HCT116 (cell line): ENCODE measurements at regions of chr1 and their contacts with region 1.

Region 1: GRCh38 chr1:95043141-95043980 is 29.4 kb downstream of the ALG14 start:
- DNase-seq: peak; percentile 73
- ATAC-seq: peak; percentile 87
- H3K4me3 ChIP-seq: no peak overlapping the region
- H3K27ac ChIP-seq: no peak overlapping the region
- H3K4me1 ChIP-seq: peaks cover 3 to 33% of the 10 kb centered on the region in 2 experiments; a peak in 3 of 4 replicates
- H3K27me3 ChIP-seq: no peaks in the 10 kb centered on the region
- CTCF ChIP-seq: peak; percentile 97 to 99 (median 99)
- POLR2A ChIP-seq: no peak
- RAD21 ChIP-seq: peak; percentile 94

Region 2: GRCh38 chr1:94481473-94481933 is 561.9 kb before region 1 on chr1:
- CTCF ChIA-PET with region 1: interaction called, 3 read pairs
- POLR2A ChIA-PET with region 1: no interaction called
- RAD21 ChIA-PET with region 1: interaction called in 1 of 2 experiments, 3 read pairs
- intact Hi-C with region 1: loop called (anchors 1 kb)
- DNase-seq: peak; percentile 69
- ATAC-seq: peak; percentile 99
- H3K4me3 ChIP-seq: no peak overlapping the region
- H3K27ac ChIP-seq: no peak overlapping the region
- H3K4me1 ChIP-seq: peaks cover 0 to 8% of the 10 kb centered on the region in 2 experiments; a peak in 2 of 4 replicates
- H3K27me3 ChIP-seq: no peaks in the 10 kb centered on the region
- CTCF ChIP-seq: peak; percentile 69 to 91 (median 89)
- POLR2A ChIP-seq: no peak
- RAD21 ChIP-seq: peak; percentile 73

Region 3: DNA sequence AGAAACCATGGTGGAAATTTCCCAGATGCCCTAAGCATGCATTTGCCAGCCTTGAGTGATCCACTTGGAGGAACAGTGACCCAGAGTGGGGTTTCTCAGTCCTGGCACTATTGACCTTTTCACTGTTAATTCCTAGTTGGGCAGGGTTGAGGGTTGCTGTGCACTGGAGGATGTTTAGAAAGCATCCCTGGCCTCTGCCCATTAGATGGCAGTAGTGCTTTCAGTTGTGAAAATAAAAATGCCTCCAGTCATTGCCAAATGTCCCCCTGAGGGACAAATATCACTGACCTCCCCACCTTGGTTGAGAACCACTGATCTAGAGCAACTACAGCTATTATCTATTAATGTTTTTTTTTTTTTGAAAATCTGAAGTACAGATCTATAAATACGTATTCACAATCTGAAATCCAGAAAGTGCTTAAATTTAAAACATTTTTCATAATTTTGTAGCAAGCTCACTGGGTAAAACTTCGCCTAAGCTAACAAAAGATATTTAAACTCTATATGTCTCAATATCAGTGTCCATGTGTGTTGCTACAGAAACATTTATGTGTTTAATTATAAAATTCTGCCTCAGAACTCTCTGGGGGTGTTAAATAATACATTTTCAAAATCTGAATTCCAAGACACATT is 529.1 kb before region 1 on chr1:
- CTCF ChIA-PET with region 1: no interaction called
- POLR2A ChIA-PET with region 1: no interaction called
- RAD21 ChIA-PET with region 1: no interaction called
- intact Hi-C with region 1: loop called (anchors 2 kb)
- DNase-seq: peak; percentile 42
- ATAC-seq: peak; percentile 86
- H3K4me3 ChIP-seq: no peak overlapping the region
- H3K27ac ChIP-seq: no peak overlapping the region
- H3K4me1 ChIP-seq: no peaks in the 10 kb centered on the region
- H3K27me3 ChIP-seq: no peaks in the 10 kb centered on the region
- CTCF ChIP-seq: peak; percentile 63 to 77 (median 74); a peak in 5 of 6 replicates
- POLR2A ChIP-seq: no peak
- RAD21 ChIP-seq: peak; percentile 80

Region 4: GRCh38 chr1:94854458-94855306 is 188.7 kb before region 1 on chr1:
- CTCF ChIA-PET with region 1: interaction called, 190 read pairs
- POLR2A ChIA-PET with region 1: interaction called, 5 read pairs
- RAD21 ChIA-PET with region 1: interaction called, 30 to 52 read pairs
- intact Hi-C with region 1: loop called (anchors 1 kb)
- DNase-seq: peak; percentile 86
- ATAC-seq: peak; percentile 92
- H3K4me3 ChIP-seq: peak overlapping the region; percentile 42 to 57
- H3K27ac ChIP-seq: peak overlapping the region; percentile 28; the same call in 1 of the 2 replicates
- H3K4me1 ChIP-seq: peaks cover 16 to 31% of the 10 kb centered on the region in 2 experiments
- H3K27me3 ChIP-seq: no peaks in the 10 kb centered on the region
- CTCF ChIP-seq: peak; percentile 91 to 94 (median 93)
- POLR2A ChIP-seq: no peak
- RAD21 ChIP-seq: peak; percentile 96

Region 5: GRCh38 chr1:94863919-94864318 is 179.4 kb before region 1 on chr1:
- CTCF ChIA-PET with region 1: interaction called, 12 read pairs
- POLR2A ChIA-PET with region 1: no interaction called
- RAD21 ChIA-PET with region 1: interaction called in 1 of 2 experiments, 3 read pairs
- intact Hi-C with region 1: no loop called
- DNase-seq: peak; percentile 78
- ATAC-seq: peak; percentile 86
- H3K4me3 ChIP-seq: peak overlapping the region; percentile 0 to 46; a peak in 3 of 4 replicates
- H3K27ac ChIP-seq: peak overlapping the region; percentile 79
- H3K4me1 ChIP-seq: peaks cover 46 to 62% of the 10 kb centered on the region in 2 experiments
- H3K27me3 ChIP-seq: no peaks in the 10 kb centered on the region
- CTCF ChIP-seq: no peak
- POLR2A ChIP-seq: no peak
- RAD21 ChIP-seq: peak; percentile 19; the same call in 1 of the 2 replicates

Region 6: GRCh38 chr1:94926915-94927404 is 116.4 kb before region 1 on chr1 and contains the start of gene CNN3:
- CTCF ChIA-PET with region 1: interaction called, 3 read pairs
- POLR2A ChIA-PET with region 1: interaction called, 3 read pairs
- RAD21 ChIA-PET with region 1: interaction called in 1 of 2 experiments, 4 read pairs
- intact Hi-C with region 1: loop called (anchors 2 kb)
- DNase-seq: peak; percentile 62
- ATAC-seq: peak; percentile 85
- H3K4me3 ChIP-seq: peak within 1 kb of the TSS; percentile 69 to 86
- H3K27ac ChIP-seq: peak within 1 kb of the TSS; percentile 89
- H3K4me1 ChIP-seq: peaks cover 11 to 34% of the 10 kb centered on the region in 2 experiments; a peak in 3 of 4 replicates
- H3K27me3 ChIP-seq: no peaks in the 10 kb centered on the region
- CTCF ChIP-seq: no peak
- POLR2A ChIP-seq: peak; percentile 31
- RAD21 ChIP-seq: peak; percentile 20; the same call in 1 of the 2 replicates
- total RNA-seq, gene CNN3: 109 TPM

Region 7: GRCh38 chr1:95216292-95216990 is 173.1 kb after region 1 on chr1:
- CTCF ChIA-PET with region 1: no interaction called
- POLR2A ChIA-PET with region 1: no interaction called
- RAD21 ChIA-PET with region 1: no interaction called
- intact Hi-C with region 1: no loop called
- DNase-seq: no peak
- ATAC-seq: no peak
- H3K4me3 ChIP-seq: no peak overlapping the region
- H3K27ac ChIP-seq: no peak overlapping the region
- H3K4me1 ChIP-seq: no peaks in the 10 kb centered on the region
- H3K27me3 ChIP-seq: no peaks in the 10 kb centered on the region
- CTCF ChIP-seq: no peak
- POLR2A ChIP-seq: no peak
- RAD21 ChIP-seq: no peak

Region 8: DNA sequence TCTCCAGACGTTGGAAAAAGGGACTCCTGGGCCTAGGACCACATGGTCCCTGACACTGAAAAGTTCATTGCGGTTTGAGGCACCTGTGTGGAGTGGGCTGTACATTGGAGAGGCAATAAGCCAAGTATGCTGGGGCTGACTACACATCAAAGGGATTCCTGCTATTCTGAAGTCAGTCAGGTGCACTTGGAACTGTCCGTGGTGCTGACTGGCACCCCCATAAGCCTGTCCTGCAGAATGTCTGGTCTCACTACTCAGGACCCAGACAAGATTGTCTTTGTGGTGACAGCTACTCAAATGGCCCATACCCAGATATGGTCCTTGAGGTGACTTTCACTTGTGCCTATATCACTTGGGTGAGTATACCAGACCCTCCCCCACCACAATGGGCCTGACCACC is 341.2 kb after region 1 on chr1:
- CTCF ChIA-PET with region 1: no interaction called
- POLR2A ChIA-PET with region 1: no interaction called
- RAD21 ChIA-PET with region 1: no interaction called
- intact Hi-C with region 1: no loop called
- DNase-seq: no peak
- ATAC-seq: no peak
- H3K4me3 ChIP-seq: no peak overlapping the region
- H3K27ac ChIP-seq: no peak overlapping the region
- H3K4me1 ChIP-seq: no peaks in the 10 kb centered on the region
- H3K27me3 ChIP-seq: peaks cover 24% of the 10 kb centered on the region
- CTCF ChIP-seq: no peak
- POLR2A ChIP-seq: no peak
- RAD21 ChIP-seq: no peak